PC-3 (cell line): ENCODE measurements at regions of chr7 and their contacts with region 1.

Region 1: GRCh38 chr7:93265220-93265619 is 33.1 kb downstream of the VPS50 start:
- DNase-seq: no peak
- ATAC-seq: no peak
- H3K4me3 ChIP-seq: no peak overlapping the region
- H3K27ac ChIP-seq: no peak overlapping the region
- H3K4me1 ChIP-seq: no peaks in the 10 kb centered on the region
- H3K27me3 ChIP-seq: no peaks in the 10 kb centered on the region
- CTCF ChIP-seq: no peak

Region 2: DNA sequence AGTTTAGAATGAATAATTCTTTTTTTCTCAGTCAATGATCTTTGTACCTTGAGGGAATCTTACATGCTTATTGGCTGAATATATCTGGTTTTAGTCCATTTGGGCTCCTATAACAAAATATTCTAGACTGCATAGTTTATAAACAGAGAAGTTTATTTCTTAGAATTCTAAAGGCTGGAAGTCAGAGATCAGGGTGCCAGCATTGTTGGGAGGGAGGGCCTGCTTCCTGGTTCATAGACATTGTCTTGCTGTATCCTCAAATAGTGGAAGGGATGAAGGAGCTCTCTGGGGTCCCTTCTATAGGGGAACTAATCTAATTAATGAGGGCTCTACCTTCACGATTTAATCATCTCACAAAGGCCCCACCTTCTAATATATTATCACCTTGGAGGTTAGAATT is 29.8 kb after region 1 on chr7:
- CTCF ChIA-PET with region 1: no interaction called
- POLR2A ChIA-PET with region 1: no interaction called
- intact Hi-C with region 1: loop called (anchors 2 kb)
- DNase-seq: no peak
- ATAC-seq: no peak
- H3K4me3 ChIP-seq: no peak overlapping the region
- H3K27ac ChIP-seq: no peak overlapping the region
- H3K4me1 ChIP-seq: no peaks in the 10 kb centered on the region
- H3K27me3 ChIP-seq: no peaks in the 10 kb centered on the region
- CTCF ChIP-seq: no peak